ENCODE measurements at regions of chr4 and their contacts with region 1.

Region 1: GRCh38 chr4:38160487-38161207 is 200.4 kb downstream of the PTTG2 start:
- DNase-seq: peak; percentile 62
- H3K4me3 Mint-ChIP-seq: peak overlapping the region; percentile 10
- H3K27ac Mint-ChIP-seq: peak overlapping the region; percentile 93
- H3K4me1 Mint-ChIP-seq: peaks cover 67% of the 10 kb centered on the region
- H3K27me3 Mint-ChIP-seq: no peaks in the 10 kb centered on the region
- CTCF ChIP-seq: no peak

Region 2: GRCh38 chr4:38078590-38079421 is 81.8 kb before region 1 on chr4:
- CTCF ChIA-PET with region 1: no interaction called
- intact Hi-C with region 1: loop called (anchors 5 kb)
- DNase-seq: no peak
- H3K4me3 Mint-ChIP-seq: no peak overlapping the region
- H3K27ac Mint-ChIP-seq: peak overlapping the region; percentile 65
- H3K4me1 Mint-ChIP-seq: peaks cover 23% of the 10 kb centered on the region
- H3K27me3 Mint-ChIP-seq: no peaks in the 10 kb centered on the region
- CTCF ChIP-seq: no peak

Region 3: GRCh38 chr4:38099908-38100407 is 60.7 kb before region 1 on chr4:
- CTCF ChIA-PET with region 1: no interaction called
- intact Hi-C with region 1: no loop called
- DNase-seq: no peak
- H3K4me3 Mint-ChIP-seq: no peak overlapping the region
- H3K27ac Mint-ChIP-seq: no peak overlapping the region
- H3K4me1 Mint-ChIP-seq: no peaks in the 10 kb centered on the region
- H3K27me3 Mint-ChIP-seq: no peaks in the 10 kb centered on the region
- CTCF ChIP-seq: no peak

Measured in Calu3 (cell line).